Left ventricle myocardium superior (tissue), 1 donor: ENCODE measurements at regions of chr17 and their contacts with region 1.

Region 1: DNA sequence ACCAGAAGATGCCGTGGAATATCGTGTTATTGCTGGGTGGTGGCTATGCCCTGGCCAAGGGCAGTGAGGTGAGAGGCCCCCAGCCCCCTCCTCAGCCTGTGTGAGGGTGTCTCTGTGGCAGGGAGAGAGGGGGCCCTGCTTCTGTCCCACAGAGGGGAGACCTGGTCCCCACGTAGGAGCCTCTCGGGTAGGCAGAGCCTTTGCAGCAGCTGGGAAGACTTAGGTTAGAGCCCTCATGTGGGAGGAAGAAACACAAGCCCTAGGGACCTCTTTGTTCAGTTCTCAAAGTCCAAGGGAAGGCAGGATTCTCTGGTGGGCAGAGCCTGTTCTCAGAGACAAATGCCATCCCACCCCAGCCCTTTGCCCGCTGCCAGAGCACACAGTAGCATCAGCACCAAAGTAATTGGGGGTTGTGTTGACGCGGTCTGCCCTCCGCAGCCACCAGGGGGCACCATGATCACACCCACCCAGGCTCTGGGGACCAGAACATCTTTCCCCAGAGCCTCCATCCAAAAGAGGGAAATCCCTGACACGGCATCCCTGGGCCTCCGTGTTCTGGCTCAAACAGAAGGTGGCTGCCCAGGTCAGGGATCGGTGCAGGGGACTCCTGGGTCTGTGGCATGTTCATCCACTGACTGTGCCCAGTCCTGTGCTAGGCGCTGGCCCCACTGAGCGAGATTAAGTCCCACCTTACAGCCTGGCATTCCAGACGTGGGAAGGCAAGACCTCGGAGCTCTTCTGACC is 11.5 kb upstream of the FOXN1 start:
- DNase-seq: peak; percentile 82
- ATAC-seq: peak; percentile 85

Region 2: GRCh38 chr17:28327031-28327607 is 167.5 kb before region 1 on chr17:
- intact Hi-C with region 1: no loop called
- DNase-seq: no peak
- ATAC-seq: no peak

Region 3: DNA sequence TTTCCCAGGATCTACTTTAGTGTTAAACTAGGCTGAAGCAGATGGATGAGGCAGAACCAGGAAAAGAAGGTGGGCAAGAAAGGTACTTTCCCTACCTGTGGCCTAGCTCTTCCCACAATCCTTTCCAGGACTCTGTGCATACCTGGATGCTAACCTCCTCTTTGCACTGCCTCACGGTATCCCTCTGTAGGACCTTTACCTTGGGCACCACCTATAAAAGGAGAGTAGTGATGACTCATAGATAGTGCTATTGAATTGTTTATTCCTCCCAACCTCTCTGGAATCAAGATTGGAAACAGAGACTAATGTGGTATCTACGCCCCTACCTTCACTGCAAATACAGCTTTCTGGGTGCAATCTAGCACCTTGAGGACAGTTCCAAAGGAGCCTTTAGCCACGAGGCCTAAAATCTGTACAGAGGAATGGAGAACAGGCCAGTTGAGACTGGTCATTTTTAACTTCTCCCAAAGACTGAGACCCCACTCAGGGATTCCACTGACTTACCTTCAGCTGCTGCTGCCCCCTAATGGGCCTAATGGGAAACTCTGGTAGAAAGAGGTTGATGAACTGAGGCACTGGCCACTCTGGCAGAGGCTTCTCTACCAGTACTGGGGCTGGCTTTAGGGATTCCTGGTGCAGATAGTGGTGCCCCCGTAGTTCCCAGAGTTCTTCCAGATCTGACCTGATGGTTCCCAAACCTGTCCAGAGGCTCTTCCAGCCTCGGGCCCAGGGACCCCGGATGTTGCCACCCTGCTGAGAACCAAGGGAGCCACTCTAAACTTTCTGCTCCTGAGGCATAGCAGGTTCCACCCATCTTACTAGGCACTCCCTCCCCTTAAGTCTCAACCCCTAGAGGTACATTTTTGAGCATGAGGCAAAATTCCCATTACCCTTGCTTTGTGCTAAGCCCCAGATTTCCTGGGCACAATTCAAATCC is 118.6 kb after region 1 on chr17:
- intact Hi-C with region 1: loop called (anchors 2 kb)
- DNase-seq: no peak
- ATAC-seq: peak; percentile 71